ENCODE measurements at regions of chr2 and their contacts with region 1.

Region 1: GRCh38 chr2:68157402-68158133 is at the start of gene PNO1:
- DNase-seq: peak; percentile 92 to 94
- ATAC-seq: peak; percentile 96 to 98
- H3K4me3 ChIP-seq: peak within 1 kb of the TSS; percentile 93 to 97 (median 96)
- H3K27ac ChIP-seq: peak within 1 kb of the TSS; percentile 89 to 96 (median 91)
- H3K4me1 ChIP-seq: peaks cover 28 to 31% of the 10 kb centered on the region in 2 donors
- H3K27me3 ChIP-seq: no peaks in the 10 kb centered on the region
- CTCF ChIP-seq: peak in 1 of 5 experiments; percentile 27
- POLR2A ChIP-seq: peak; percentile 33 to 49
- total RNA-seq, gene PNO1: 19.8 to 26.4 (median 23.6) TPM

Region 2: GRCh38 chr2:68062680-68063387 is 94.7 kb before region 1 on chr2 and contains the start of gene C1D:
- in situ Hi-C with region 1: no loop called
- intact Hi-C with region 1: loop called (anchors 2 kb)
- DNase-seq: peak; percentile 84 to 90
- ATAC-seq: peak; percentile 99
- H3K4me3 ChIP-seq: peak within 1 kb of the TSS; percentile 60 to 88 (median 82)
- H3K27ac ChIP-seq: peak within 1 kb of the TSS; percentile 82 to 92 (median 90)
- H3K4me1 ChIP-seq: peaks cover 38 to 50% of the 10 kb centered on the region in 2 donors
- H3K27me3 ChIP-seq: no peaks in the 10 kb centered on the region
- CTCF ChIP-seq: no peak
- POLR2A ChIP-seq: peak; percentile 46 to 48
- total RNA-seq, gene C1D: 29.7 to 57.3 (median 41.4) TPM

Region 3: GRCh38 chr2:68302281-68302875 is 144.8 kb after region 1 on chr2:
- in situ Hi-C with region 1: no loop called
- intact Hi-C with region 1: no loop called
- DNase-seq: no peak
- ATAC-seq: no peak
- H3K4me3 ChIP-seq: no peak overlapping the region
- H3K27ac ChIP-seq: no peak overlapping the region
- H3K4me1 ChIP-seq: no peaks in the 10 kb centered on the region
- H3K27me3 ChIP-seq: no peaks in the 10 kb centered on the region
- CTCF ChIP-seq: no peak
- POLR2A ChIP-seq: no peak

Measured in gastrocnemius medialis (tissue), 4 donors.